Gastrocnemius medialis (tissue), 4 donors: ENCODE measurements at regions of chr6 and their contacts with region 1.

Region 1: DNA sequence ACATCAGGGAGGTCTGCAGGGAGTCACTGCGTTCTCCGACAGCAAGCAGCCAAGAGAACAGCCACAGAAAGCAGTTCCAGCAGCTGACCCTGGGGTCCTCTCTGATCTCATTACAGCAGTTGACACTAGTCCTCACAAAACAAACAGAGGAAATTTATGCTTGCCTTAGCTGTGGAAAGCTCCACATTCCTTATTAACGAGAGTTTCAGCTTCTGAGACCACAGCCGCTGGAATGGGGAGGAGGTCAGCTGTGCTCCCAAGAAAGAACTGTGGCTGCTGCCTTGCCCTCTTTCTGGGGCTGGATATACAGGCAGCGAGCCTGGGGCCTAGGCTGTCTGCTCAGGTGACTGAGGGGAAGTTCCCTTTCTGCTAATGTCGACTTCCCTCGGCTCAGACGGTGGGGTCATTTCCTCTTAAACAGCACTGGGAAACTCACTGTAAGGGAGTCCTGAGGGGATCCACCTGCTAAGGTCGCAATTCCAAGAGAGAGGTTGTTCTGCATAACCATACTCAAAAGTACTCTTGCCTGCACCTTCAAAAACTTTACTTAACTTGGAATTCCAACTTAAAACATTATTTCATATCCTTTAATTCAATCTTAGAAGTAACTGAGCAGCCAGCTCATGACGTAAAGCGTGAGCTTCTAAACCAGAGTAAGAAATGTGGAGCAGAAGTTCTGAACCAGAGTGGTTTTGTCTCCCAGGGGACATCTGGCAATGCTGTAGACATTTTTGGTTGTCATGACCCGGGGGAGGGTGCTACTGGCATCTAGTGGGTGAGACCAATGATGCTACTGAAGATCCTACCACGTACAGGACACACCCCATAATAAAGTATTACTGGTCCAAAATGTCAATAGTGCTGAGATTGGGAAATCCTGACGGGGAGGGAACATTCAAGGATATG is 80.3 kb downstream of the BACH2 start:
- DNase-seq: peak in 1 of 2 donors; percentile 36
- ATAC-seq: no peak
- H3K4me3 ChIP-seq: no peak overlapping the region
- H3K27ac ChIP-seq: peak overlapping the region; percentile 86 to 96 (median 93)
- H3K4me1 ChIP-seq: peaks cover 46 to 73% of the 10 kb centered on the region in 2 donors
- H3K27me3 ChIP-seq: no peaks in the 10 kb centered on the region
- CTCF ChIP-seq: no peak
- POLR2A ChIP-seq: no peak

Region 2: DNA sequence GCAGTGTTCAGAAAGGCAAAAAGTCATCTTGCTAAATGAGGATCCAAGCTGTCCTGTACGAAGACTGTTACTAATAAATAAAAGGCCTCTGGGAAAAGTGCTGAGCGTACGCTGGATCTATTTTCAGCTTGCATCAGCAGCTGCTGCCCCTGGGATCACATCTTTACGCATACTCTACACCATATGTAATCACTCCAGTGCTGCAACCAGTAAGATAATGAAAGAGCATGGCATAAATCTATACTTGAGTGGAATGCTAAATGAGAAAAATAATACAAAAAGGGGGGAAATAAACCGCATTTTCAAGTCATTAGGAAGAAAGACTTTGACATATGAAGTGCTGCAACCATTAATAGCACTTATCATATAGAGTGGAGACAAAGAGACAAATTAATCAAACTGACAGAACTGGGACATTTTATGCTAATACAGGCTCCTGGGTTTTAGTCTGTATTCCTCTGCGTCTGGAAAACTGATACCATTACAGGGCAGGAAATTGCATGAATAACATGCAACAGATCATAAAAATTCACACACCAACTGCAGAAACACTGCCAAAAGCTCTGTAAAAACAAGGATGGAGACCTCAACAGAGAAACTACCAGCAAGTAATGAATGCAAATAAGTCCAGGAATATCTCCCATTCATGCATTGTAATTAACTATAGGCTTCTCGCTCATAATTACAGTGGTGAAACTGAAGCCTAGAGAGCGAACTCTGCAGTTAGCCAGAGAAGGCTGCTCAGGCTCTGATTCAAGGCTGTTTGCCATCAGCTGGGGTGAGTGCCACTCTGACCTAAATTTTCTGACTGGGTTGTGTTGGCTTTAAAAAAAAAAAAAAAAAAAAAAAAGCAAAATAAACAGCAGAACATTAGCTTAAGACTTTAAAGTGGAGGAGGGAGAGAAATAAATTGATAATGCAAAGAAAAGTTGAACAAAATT is 238.2 kb before region 1 on chr6:
- in situ Hi-C with region 1: no loop called
- intact Hi-C with region 1: loop called (anchors 5 kb)
- DNase-seq: peak; percentile 56 to 65
- ATAC-seq: peak; percentile 89 to 91
- H3K4me3 ChIP-seq: peak overlapping the region in 2 of 4 donors; percentile 1 to 9
- H3K27ac ChIP-seq: peak overlapping the region; percentile 66 to 90 (median 80)
- H3K4me1 ChIP-seq: peaks cover 38 to 54% of the 10 kb centered on the region in 2 donors
- H3K27me3 ChIP-seq: no peaks in the 10 kb centered on the region
- CTCF ChIP-seq: no peak
- POLR2A ChIP-seq: no peak

Region 3: DNA sequence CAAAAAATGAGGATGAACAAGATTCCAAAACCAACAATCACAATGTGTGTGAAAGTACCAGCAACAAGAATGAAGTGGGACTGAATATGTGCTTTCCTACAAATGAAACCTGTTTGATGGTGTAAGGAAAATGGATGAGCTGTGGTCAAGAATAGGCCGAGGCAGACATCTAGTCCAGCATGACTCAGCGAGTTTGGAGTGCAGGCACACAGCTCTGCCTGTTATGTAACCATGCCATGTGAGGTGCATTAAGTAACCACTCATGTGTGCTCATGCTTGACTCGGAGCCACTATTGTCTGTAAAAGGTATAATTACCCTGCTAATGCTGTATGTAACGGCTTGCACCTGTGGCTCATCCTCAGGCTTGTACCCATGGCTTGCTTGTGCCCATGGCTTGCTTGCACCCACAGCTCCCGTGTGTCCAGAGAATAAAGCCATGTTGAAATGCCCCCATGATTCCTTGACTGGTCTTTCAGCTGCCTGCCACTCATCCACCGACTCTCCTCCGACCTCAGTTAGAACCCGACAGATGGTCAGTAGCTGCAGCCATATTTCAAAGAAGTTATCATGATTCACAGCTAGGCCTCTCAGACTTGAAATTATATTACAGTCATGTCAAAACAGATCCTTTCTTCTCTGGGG is 18.4 kb before region 1 on chr6:
- in situ Hi-C with region 1: no loop called
- intact Hi-C with region 1: loop called (anchors 1 kb)
- DNase-seq: peak; percentile 67 to 86
- ATAC-seq: peak; percentile 68 to 89
- H3K4me3 ChIP-seq: no peak overlapping the region
- H3K27ac ChIP-seq: peak overlapping the region; percentile 62 to 80 (median 78)
- H3K4me1 ChIP-seq: peaks cover 64 to 67% of the 10 kb centered on the region in 2 donors
- H3K27me3 ChIP-seq: no peaks in the 10 kb centered on the region
- CTCF ChIP-seq: no peak
- POLR2A ChIP-seq: no peak

Region 4: DNA sequence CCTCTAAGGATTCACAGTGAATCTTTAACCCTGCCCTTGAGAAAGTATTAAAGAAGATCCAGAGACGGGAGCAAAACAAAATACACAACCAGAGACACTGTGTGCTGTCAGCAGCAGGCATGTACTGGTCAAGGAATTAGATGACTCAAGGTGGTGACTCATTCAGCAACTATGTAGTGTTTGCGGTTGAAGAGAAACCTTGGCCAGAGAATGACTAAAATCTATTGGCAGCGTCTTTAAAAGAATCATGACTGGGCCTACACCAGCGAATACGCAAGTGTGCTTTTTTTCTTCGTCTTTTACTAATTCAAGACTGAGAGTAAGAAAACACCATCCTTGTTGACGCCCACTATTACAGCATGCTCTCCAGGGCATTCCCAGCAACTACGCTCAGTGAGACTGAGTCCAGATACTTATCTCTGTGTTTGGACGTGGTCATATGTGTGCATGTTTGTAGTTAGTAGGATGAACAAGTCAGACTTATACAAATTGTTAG is 152.7 kb after region 1 on chr6:
- in situ Hi-C with region 1: no loop called
- intact Hi-C with region 1: loop called (anchors 2 kb)
- DNase-seq: peak; percentile 69
- ATAC-seq: peak; percentile 99 to 100
- H3K4me3 ChIP-seq: no peak overlapping the region
- H3K27ac ChIP-seq: peak overlapping the region; percentile 55 to 81 (median 62)
- H3K4me1 ChIP-seq: peaks cover 8 to 13% of the 10 kb centered on the region in 2 donors
- H3K27me3 ChIP-seq: no peaks in the 10 kb centered on the region
- CTCF ChIP-seq: no peak
- POLR2A ChIP-seq: no peak